HEK293 (cell line): ENCODE measurements at regions of chr6 and their contacts with region 1.

Region 1: DNA sequence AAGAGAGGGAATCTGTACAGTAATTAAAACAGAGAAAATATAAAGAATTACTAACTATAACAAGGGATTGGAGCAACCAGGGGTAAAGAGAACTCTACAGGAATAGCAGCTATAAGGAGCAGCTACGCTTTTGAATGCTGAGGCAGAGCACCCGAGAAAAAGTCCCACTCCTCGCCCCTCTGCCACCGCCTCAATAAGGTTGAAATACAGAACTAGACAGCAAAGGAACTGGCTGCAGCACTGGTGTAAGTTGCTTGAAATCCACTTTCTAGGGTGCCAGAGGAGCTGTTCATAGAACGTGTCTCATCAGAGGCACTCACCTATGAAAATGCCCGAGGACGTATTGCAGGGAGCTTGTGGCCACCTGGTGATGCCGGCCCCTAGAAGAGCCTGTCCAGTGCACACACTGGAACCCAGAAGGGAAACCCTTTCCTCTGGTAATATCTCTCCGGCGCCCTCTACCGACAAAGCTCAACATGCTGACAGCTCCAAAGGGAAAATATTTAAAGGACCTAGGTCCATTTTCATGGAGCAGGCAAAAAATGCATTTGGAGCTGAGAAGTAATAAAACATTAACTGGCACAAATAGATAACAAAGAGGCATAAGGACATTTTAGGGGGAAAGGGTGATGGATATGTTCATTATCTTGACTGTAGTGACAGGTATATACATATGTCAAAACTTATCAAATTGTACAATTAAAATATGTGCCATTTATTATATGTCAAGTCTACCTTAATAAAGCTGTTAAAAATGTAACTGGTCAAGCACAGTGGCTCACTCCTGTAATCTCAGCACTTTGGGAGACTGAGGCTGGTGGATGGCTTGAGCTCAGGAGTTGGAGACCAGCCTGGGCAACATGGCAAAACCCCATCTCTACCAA is 137.4 kb upstream of the HDAC2 start:
- H3K4me3 ChIP-seq: no peak overlapping the region
- H3K27ac ChIP-seq: no peak overlapping the region
- H3K4me1 ChIP-seq: no peaks in the 10 kb centered on the region
- CTCF ChIP-seq: no peak

Region 2: GRCh38 chr6:113610377-113610988 is 497.9 kb before region 1 on chr6:
- CTCF ChIA-PET with region 1: no interaction called
- POLR2A ChIA-PET with region 1: no interaction called
- H3K4me3 ChIP-seq: no peak overlapping the region
- H3K27ac ChIP-seq: no peak overlapping the region
- H3K4me1 ChIP-seq: no peaks in the 10 kb centered on the region
- CTCF ChIP-seq: no peak

Region 3: DNA sequence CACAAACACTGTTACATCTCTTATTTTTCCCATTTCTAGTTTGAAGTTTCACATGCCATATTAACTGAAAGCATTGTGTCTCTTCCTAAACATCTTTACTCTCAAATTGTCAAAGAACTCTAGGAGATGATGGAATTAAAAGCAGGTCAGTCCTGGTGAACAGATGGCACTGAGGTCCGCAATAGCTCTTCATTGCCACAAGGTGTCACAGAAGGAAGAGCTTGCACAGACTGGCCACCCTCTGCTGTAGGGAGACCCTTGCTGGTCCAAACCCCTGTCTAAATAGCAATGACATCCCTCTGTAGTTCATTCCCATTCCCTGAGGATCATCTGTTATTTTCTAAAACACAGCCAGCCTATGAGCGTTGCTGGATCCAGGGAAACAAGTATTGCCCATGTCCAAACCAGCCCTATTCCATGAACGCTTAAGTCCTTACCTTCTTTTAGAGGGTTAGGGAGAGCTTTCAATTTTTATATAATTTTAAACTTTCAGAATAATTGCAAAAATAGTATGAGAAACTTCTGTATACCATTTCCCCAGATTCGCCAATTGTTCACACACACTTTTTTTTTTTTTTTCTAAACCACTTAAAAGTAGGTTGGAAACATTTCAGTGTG is 127.3 kb before region 1 on chr6:
- CTCF ChIA-PET with region 1: interaction called, 29 read pairs
- POLR2A ChIA-PET with region 1: no interaction called
- H3K4me3 ChIP-seq: no peak overlapping the region
- H3K27ac ChIP-seq: no peak overlapping the region
- H3K4me1 ChIP-seq: no peaks in the 10 kb centered on the region
- CTCF ChIP-seq: no peak

Region 4: GRCh38 chr6:114085211-114085610 is 23.1 kb before region 1 on chr6:
- CTCF ChIA-PET with region 1: interaction called, 14 read pairs
- POLR2A ChIA-PET with region 1: no interaction called
- H3K4me3 ChIP-seq: no peak overlapping the region
- H3K27ac ChIP-seq: no peak overlapping the region
- H3K4me1 ChIP-seq: no peaks in the 10 kb centered on the region
- CTCF ChIP-seq: no peak

Region 5: GRCh38 chr6:114119056-114119455 is 10.7 kb after region 1 on chr6:
- CTCF ChIA-PET with region 1: interaction called, 21 read pairs
- POLR2A ChIA-PET with region 1: no interaction called
- H3K4me3 ChIP-seq: no peak overlapping the region
- H3K27ac ChIP-seq: no peak overlapping the region
- H3K4me1 ChIP-seq: no peaks in the 10 kb centered on the region
- CTCF ChIP-seq: no peak

Region 6: GRCh38 chr6:114135363-114135992 is 27.1 kb after region 1 on chr6:
- CTCF ChIA-PET with region 1: interaction called, 11 read pairs
- POLR2A ChIA-PET with region 1: no interaction called
- H3K4me3 ChIP-seq: no peak overlapping the region
- H3K27ac ChIP-seq: no peak overlapping the region
- H3K4me1 ChIP-seq: no peaks in the 10 kb centered on the region
- CTCF ChIP-seq: no peak

Region 7: GRCh38 chr6:114304304-114304887 is 196.0 kb after region 1 on chr6:
- CTCF ChIA-PET with region 1: interaction called, 33 read pairs
- POLR2A ChIA-PET with region 1: no interaction called
- H3K4me3 ChIP-seq: no peak overlapping the region
- H3K27ac ChIP-seq: no peak overlapping the region
- H3K4me1 ChIP-seq: no peaks in the 10 kb centered on the region
- CTCF ChIP-seq: no peak